Ascending aorta (tissue), 2 donors: ENCODE measurements at regions of chr10 and their contacts with region 1.

Region 1: GRCh38 chr10:2628705-2629104 is 438.6 kb upstream of the PFKP start:
- DNase-seq: no peak
- H3K4me3 ChIP-seq: no peak overlapping the region
- H3K27ac ChIP-seq: no peak overlapping the region
- H3K4me1 ChIP-seq: no peaks in the 10 kb centered on the region
- H3K27me3 ChIP-seq: no peaks in the 10 kb centered on the region
- CTCF ChIP-seq: no peak

Region 2: GRCh38 chr10:1465418-1465976 is 1163.2 kb before region 1 on chr10:
- intact Hi-C with region 1: loop called (anchors 5 kb)
- DNase-seq: no peak
- H3K4me3 ChIP-seq: no peak overlapping the region
- H3K27ac ChIP-seq: no peak overlapping the region
- H3K4me1 ChIP-seq: no peaks in the 10 kb centered on the region
- H3K27me3 ChIP-seq: no peaks in the 10 kb centered on the region
- CTCF ChIP-seq: no peak

Region 3: GRCh38 chr10:3095373-3096139 is 466.9 kb after region 1 on chr10:
- intact Hi-C with region 1: no loop called
- DNase-seq: peak in 1 of 2 donors; percentile 84
- H3K4me3 ChIP-seq: peak overlapping the region; percentile 7 to 56
- H3K27ac ChIP-seq: peak overlapping the region; percentile 88 to 90
- H3K4me1 ChIP-seq: peaks cover 17 to 33% of the 10 kb centered on the region in 2 donors
- H3K27me3 ChIP-seq: no peaks in the 10 kb centered on the region
- CTCF ChIP-seq: no peak